ENCODE measurements at regions of chr15 and their contacts with region 1.

Region 1: DNA sequence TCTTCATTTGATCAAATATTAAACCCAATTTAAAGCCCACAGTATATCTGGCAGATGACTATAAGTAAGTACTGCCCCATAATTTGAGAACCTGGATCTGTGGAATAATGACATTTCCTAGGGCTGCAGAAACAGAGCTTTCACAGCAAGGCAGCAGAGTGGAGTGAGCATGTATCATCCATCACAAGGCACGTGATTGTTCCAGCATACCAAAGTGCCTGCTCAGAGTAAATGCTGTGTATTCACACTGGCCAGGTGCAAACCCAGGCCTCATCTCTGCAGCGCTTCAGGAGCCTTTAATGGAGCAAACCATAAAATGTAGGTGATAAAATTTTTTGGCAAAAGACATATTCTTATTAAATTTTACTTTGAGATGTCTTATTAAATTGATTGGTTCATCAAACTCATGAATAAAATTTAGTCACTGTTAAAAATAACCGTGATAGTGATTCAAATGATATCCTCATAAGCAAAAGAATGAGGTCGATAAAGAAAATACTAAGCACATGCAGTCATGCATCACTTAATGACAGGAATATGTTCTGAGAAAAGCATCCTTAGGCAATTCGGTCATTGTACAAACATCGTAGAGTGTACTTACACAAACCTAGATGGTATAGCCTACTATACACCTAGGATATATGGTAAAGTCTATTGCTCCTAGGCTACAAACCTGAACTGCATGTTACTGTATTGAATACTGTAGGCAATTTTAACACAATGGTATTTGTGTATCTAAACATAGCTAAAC is 99.3 kb upstream of the SLC24A5 start:
- DNase-seq: no peak
- ATAC-seq: no peak
- H3K4me3 ChIP-seq: no peak overlapping the region
- H3K27ac ChIP-seq: no peak overlapping the region
- H3K4me1 ChIP-seq: no peaks in the 10 kb centered on the region
- H3K27me3 ChIP-seq: peaks cover 0 to 2% (median 0%) of the 10 kb centered on the region in 3 donors
- CTCF ChIP-seq: no peak

Region 2: DNA sequence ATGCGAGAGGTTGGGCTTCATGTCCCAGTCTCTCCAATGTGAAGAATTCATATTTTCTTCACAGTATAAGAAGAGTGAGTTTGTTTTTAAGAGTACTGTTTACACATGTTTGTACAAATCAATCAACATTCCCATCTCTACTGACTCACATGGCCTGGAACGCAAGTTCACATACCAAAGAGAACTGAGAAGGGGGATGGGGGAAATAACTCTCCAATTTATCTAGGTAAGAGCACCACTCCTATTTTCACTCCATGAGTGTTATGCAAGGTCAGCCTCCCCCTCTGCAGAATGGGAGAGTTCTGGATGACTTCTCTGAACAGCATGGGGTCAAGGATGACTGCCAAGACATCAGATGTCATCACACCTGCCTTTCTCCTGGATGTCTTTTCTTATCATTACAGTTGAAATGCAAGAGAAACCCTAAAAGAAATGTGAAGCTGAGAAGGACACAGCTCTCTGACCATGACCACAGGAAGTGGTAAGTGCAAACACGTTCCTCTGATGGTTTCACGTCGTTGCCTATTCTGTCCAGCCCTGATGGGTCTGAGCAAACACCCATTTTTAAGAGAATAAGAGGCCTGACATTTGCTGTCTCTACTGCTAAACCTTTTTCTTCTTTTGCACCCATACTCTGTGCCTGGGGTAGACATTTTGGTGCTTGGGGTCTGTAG is 208.9 kb before region 1 on chr15:
- intact Hi-C with region 1: no loop called
- DNase-seq: no peak
- ATAC-seq: peak; percentile 60 to 88 (median 78)
- H3K4me3 ChIP-seq: no peak overlapping the region
- H3K27ac ChIP-seq: no peak overlapping the region
- H3K4me1 ChIP-seq: peaks cover 17% of the 10 kb centered on the region
- H3K27me3 ChIP-seq: no peaks in the 10 kb centered on the region
- CTCF ChIP-seq: no peak

Region 3: DNA sequence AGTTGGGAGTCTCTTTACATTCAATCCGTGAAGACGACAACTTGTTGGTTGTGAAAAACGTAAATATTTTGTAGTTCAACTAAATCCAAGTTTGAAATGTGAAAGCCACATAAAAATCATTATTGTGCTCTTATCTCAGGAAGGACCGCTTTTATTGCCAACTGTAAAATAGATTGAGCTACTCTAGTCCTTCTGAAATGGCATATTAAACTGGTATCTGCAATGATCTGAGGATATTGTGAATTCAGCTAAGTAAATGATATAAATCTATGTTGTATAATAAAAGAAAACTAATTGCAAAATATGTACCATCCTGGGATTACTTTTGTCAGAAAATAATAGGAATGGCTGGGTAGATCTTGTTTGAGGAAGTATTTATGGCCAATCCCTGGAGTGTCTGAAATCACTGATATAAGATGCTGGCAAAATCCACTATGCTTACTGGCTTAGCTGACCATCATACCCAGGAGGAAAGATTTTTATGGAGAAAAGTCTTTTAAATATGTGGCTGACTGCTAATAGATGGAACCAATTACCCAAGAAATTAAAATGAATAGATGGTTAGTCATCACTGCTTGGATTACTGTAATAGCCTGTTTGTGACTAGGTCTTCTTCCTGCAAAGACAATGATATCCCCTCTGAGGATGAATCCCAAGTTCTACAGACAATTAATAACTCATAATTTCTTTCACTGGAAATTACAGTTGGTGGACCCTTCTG is 112.4 kb before region 1 on chr15:
- intact Hi-C with region 1: no loop called
- DNase-seq: no peak
- ATAC-seq: no peak
- H3K4me3 ChIP-seq: no peak overlapping the region
- H3K27ac ChIP-seq: no peak overlapping the region
- H3K4me1 ChIP-seq: no peaks in the 10 kb centered on the region
- H3K27me3 ChIP-seq: no peaks in the 10 kb centered on the region
- CTCF ChIP-seq: no peak

Region 4: DNA sequence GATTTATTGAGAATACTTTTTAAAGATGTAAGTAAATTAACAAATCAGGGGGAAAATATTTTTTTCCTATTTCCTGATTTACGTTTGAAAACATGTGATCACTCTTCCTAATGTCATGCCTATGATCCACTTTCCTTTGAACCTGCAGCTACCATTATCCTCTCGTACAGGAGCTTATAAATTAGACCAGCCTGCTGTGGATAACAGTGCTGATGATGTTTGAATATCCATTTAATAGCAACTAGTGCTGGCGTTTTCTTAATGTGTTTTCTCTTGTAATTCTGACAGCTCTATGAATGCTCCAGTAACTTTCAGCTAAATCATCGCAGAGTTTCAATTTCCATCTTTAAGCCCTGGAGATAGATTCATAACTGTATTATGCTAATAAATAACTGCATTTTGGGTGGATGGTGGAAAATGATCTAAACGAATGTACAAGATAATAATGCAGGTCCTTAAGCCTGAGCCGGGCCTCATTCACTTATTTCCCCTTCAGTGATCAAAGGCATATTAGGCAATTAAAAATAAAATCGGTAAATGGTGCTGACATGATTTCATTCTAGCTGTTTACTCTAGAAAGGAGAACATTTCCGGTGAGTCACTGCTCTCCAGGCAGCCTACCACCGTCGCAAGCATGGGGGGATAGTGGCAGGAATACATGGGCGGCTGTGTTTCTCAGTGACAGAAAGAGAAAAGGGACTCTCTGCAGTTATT is 40.8 kb after region 1 on chr15:
- intact Hi-C with region 1: no loop called
- DNase-seq: no peak
- ATAC-seq: no peak
- H3K4me3 ChIP-seq: no peak overlapping the region
- H3K27ac ChIP-seq: no peak overlapping the region
- H3K4me1 ChIP-seq: no peaks in the 10 kb centered on the region
- H3K27me3 ChIP-seq: no peaks in the 10 kb centered on the region
- CTCF ChIP-seq: no peak

Region 5: DNA sequence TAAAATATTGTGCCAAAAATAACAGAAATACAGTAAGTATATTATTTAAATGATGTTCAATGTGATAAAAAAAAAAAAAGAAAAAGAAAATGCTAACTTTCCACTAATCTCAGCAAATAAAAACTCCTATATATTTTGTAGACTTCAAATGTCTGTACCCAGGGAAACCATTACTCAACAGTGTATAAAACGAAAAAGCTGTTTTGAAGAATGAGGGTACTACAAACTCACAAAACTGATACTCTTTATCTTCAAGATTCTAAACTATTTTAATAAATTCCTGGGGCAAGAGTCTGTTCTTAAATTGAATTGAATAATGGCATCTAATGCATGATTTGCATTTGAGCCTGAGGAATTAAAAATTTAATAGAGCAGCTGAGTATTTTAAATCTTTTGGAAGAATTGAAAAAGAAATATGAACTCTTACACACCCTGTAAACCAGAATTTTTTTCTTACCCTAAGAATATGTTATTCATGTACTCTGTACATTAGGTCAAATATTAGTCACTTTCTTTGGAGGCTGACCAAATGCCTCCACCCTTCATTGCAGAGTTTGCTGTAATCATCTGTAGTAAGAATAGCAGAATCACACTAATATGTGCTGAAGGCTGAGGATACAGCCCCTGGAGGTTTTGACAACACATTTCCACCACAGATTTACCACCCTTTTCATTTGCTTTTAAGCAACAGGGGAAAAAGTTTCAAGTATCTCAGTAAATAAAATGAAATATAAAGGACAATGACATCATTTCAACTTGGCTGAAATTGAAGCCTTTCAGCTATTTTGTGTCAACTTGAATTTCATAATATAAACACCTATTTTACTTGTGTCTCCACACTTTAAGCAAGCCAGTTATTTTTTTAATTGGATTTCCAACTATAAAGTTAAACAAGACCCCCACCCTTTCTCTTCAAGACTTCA is 544.3 kb after region 1 on chr15:
- intact Hi-C with region 1: loop called in 1 of 2 experiments (anchors 10 kb)
- DNase-seq: no peak
- ATAC-seq: peak in 1 of 4 donors; percentile 30
- H3K4me3 ChIP-seq: no peak overlapping the region
- H3K27ac ChIP-seq: no peak overlapping the region
- H3K4me1 ChIP-seq: no peaks in the 10 kb centered on the region
- H3K27me3 ChIP-seq: no peaks in the 10 kb centered on the region
- CTCF ChIP-seq: no peak